ENCODE measurements at regions of chr14 and their contacts with region 1.

Region 1: GRCh38 chr14:55446218-55446654 is 5.8 kb upstream of the TBPL2 start:
- DNase-seq: peak in 4 of 5 donors; percentile 40 to 62 (median 52)
- ATAC-seq: peak in 3 of 4 donors; percentile 67 to 70 (median 68)
- H3K4me3 ChIP-seq: no peak overlapping the region
- H3K27ac ChIP-seq: peak overlapping the region in 3 of 12 donors; percentile 30 to 57 (median 34)
- H3K4me1 ChIP-seq: peaks cover 0 to 22% (median 4%) of the 10 kb centered on the region in 12 donors
- H3K27me3 ChIP-seq: no peaks in the 10 kb centered on the region
- CTCF ChIP-seq: peak; percentile 56 to 72 (median 64)
- POLR2A ChIP-seq: no peak

Region 2: GRCh38 chr14:55638665-55639064 is 192.4 kb after region 1 on chr14:
- intact Hi-C with region 1: loop called in 1 of 10 experiments (anchors 10 kb)
- DNase-seq: no peak
- ATAC-seq: no peak
- H3K4me3 ChIP-seq: no peak overlapping the region
- H3K27ac ChIP-seq: no peak overlapping the region
- H3K4me1 ChIP-seq: peaks cover 0 to 13% (median 0%) of the 10 kb centered on the region in 12 donors
- H3K27me3 ChIP-seq: no peaks in the 10 kb centered on the region
- CTCF ChIP-seq: no peak
- POLR2A ChIP-seq: no peak

Region 3: DNA sequence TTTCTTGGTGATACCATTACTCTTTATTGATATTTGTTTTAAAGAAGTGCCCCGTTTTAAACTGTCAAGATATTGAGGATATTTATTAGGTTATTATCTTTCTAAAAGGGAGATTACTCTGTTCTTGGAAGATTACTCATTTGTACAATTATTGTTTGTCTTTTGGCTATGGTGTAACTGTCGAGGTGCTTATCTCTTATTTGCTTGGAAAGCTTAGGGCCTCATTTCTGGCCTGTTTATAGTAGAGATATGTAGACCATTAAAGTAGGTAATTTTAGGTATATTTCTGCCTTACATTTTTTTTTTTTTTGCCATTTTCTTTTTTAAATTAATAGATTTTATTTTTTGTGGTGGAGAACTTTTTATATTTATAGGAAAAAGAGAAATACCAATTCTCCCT is 208.0 kb after region 1 on chr14:
- intact Hi-C with region 1: no loop called
- DNase-seq: no peak
- ATAC-seq: no peak
- H3K4me3 ChIP-seq: no peak overlapping the region
- H3K27ac ChIP-seq: no peak overlapping the region
- H3K4me1 ChIP-seq: no peaks in the 10 kb centered on the region
- H3K27me3 ChIP-seq: no peaks in the 10 kb centered on the region
- CTCF ChIP-seq: no peak
- POLR2A ChIP-seq: no peak

Region 4: GRCh38 chr14:55665067-55665675 is 218.9 kb after region 1 on chr14:
- intact Hi-C with region 1: loop called in 2 of 10 experiments (anchors 10 kb)
- DNase-seq: no peak
- ATAC-seq: no peak
- H3K4me3 ChIP-seq: no peak overlapping the region
- H3K27ac ChIP-seq: no peak overlapping the region
- H3K4me1 ChIP-seq: peaks cover 0 to 16% (median 4%) of the 10 kb centered on the region in 12 donors
- H3K27me3 ChIP-seq: no peaks in the 10 kb centered on the region
- CTCF ChIP-seq: no peak
- POLR2A ChIP-seq: no peak

Region 5: GRCh38 chr14:55671641-55672040 is 225.4 kb after region 1 on chr14:
- intact Hi-C with region 1: loop called in 2 of 10 experiments (anchors 10 kb)
- DNase-seq: no peak
- ATAC-seq: no peak
- H3K4me3 ChIP-seq: no peak overlapping the region
- H3K27ac ChIP-seq: no peak overlapping the region
- H3K4me1 ChIP-seq: peaks cover 0 to 11% (median 0%) of the 10 kb centered on the region in 12 donors
- H3K27me3 ChIP-seq: no peaks in the 10 kb centered on the region
- CTCF ChIP-seq: no peak
- POLR2A ChIP-seq: no peak